Naive thymus-derived CD4-positive, alpha-beta T cell (primary cell): ENCODE measurements at regions of chr12 and their contacts with region 1.

Region 1: GRCh38 chr12:120012067-120012621 is 23.1 kb downstream of the BICDL1 start:
- DNase-seq: peak in 8 of 9 donors; percentile 31 to 98 (median 74)
- ATAC-seq: peak; percentile 78
- H3K4me3 ChIP-seq: peak overlapping the region; percentile 33
- H3K4me3 Mint-ChIP-seq: peak overlapping the region; percentile 8 to 86 (median 74)
- H3K27ac ChIP-seq: peak overlapping the region; percentile 93
- H3K27ac Mint-ChIP-seq: peak overlapping the region; percentile 93 to 100 (median 96)
- H3K4me1 ChIP-seq: peaks cover 73 to 79% of the 10 kb centered on the region in 2 donors
- H3K4me1 Mint-ChIP-seq: peaks cover 41 to 94% (median 82%) of the 10 kb centered on the region in 7 donors
- H3K27me3 ChIP-seq: no peaks in the 10 kb centered on the region
- H3K27me3 Mint-ChIP-seq: no peaks in the 10 kb centered on the region

Region 2: DNA sequence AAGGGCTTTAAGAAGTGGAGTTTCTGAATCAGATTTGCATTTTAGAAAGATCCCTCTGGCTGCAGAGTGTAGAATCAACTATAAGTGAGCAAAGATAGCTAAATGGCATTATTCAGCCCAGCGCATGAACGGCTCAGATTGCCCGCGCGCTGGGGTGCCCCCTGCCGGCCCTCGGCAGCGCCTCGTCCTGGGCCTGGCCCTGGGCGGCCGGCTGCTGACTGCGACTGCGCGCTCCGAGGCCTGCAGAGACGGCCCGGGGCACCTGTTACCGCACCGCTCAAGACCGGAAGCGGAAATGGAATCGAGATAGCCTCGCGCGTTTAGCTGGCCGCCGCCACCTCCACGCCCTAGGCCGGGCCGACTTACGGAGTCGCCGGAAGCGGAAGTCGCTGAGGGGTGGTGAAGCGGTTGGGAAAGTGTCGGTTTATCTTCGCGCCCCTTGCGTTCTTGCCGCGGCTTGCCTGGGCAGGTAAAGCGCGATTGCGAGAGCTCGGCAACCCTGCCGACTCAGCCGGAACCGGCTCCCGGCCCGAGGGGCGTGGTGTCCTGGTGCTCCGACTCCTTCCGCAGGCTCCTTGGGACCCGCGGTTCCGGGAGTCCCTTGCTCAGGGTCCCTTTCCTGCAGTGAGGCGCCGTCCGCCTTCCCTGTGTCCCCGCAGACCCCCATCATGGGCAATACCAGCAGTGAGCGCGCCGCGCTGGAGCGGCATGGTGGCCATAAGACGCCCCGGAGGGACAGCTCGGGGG is 344.4 kb before region 1 on chr12 and contains the start of gene PRKAB1:
- CTCF ChIA-PET with region 1: no interaction called
- POLR2A ChIA-PET with region 1: no interaction called
- intact Hi-C with region 1: loop called in 1 of 2 experiments (anchors 5 kb)
- DNase-seq: peak; percentile 91 to 96 (median 93)
- ATAC-seq: peak; percentile 96
- H3K4me3 ChIP-seq: peak within 1 kb of the TSS; percentile 81
- H3K4me3 Mint-ChIP-seq: peak within 1 kb of the TSS; percentile 85 to 98 (median 88)
- H3K27ac ChIP-seq: peak within 1 kb of the TSS; percentile 76
- H3K27ac Mint-ChIP-seq: peak within 1 kb of the TSS; percentile 77 to 96 (median 92)
- H3K4me1 ChIP-seq: peaks cover 20 to 30% of the 10 kb centered on the region in 2 donors
- H3K4me1 Mint-ChIP-seq: peaks cover 27 to 63% (median 55%) of the 10 kb centered on the region in 7 donors
- H3K27me3 ChIP-seq: no peaks in the 10 kb centered on the region
- H3K27me3 Mint-ChIP-seq: no peaks in the 10 kb centered on the region
- total RNA-seq, gene PRKAB1: 23.5 to 48.7 (median 43.3) TPM

Region 3: GRCh38 chr12:119938049-119938667 is 74.0 kb before region 1 on chr12:
- CTCF ChIA-PET with region 1: no interaction called
- POLR2A ChIA-PET with region 1: no interaction called
- intact Hi-C with region 1: loop called in 1 of 2 experiments (anchors 2 kb)
- DNase-seq: peak; percentile 28 to 67 (median 51)
- ATAC-seq: peak; percentile 89
- H3K4me3 ChIP-seq: no peak overlapping the region
- H3K4me3 Mint-ChIP-seq: no peak overlapping the region
- H3K27ac ChIP-seq: no peak overlapping the region
- H3K27ac Mint-ChIP-seq: no peak overlapping the region
- H3K4me1 ChIP-seq: no peaks in the 10 kb centered on the region
- H3K4me1 Mint-ChIP-seq: no peaks in the 10 kb centered on the region
- H3K27me3 ChIP-seq: no peaks in the 10 kb centered on the region
- H3K27me3 Mint-ChIP-seq: peaks cover 0 to 7% (median 0%) of the 10 kb centered on the region in 5 donors

Region 4: DNA sequence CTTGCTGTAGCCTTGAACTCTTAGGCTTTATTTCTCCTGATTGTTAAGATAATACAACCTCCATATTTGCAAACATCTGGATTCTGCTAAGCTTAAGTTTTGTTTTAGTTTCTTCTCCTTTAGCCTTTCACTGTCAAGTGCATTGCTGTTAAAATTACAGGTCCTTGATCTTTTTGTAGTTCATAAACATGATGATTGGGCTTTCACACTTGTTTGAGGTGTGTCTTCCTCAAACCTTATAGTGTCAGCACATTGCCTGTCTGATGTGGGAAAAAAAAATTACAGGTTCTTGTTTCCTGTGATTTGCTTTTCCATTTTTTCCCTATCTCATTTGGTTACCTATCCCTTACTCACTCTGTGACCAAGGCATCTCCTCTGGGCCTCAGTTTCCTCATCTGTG is 36.1 kb after region 1 on chr12:
- CTCF ChIA-PET with region 1: interaction called, 3 read pairs
- POLR2A ChIA-PET with region 1: interaction called, 10 read pairs
- intact Hi-C with region 1: no loop called
- DNase-seq: peak in 4 of 9 donors; percentile 14 to 31 (median 20)
- ATAC-seq: peak; percentile 74
- H3K4me3 ChIP-seq: no peak overlapping the region
- H3K4me3 Mint-ChIP-seq: peak overlapping the region in 6 of 10 donors; percentile 12 to 59 (median 38)
- H3K27ac ChIP-seq: no peak overlapping the region
- H3K27ac Mint-ChIP-seq: peak overlapping the region; percentile 62 to 90 (median 87)
- H3K4me1 ChIP-seq: peaks cover 10 to 19% of the 10 kb centered on the region in 2 donors
- H3K4me1 Mint-ChIP-seq: peaks cover 9 to 52% (median 38%) of the 10 kb centered on the region in 7 donors
- H3K27me3 ChIP-seq: no peaks in the 10 kb centered on the region
- H3K27me3 Mint-ChIP-seq: no peaks in the 10 kb centered on the region

Region 5: DNA sequence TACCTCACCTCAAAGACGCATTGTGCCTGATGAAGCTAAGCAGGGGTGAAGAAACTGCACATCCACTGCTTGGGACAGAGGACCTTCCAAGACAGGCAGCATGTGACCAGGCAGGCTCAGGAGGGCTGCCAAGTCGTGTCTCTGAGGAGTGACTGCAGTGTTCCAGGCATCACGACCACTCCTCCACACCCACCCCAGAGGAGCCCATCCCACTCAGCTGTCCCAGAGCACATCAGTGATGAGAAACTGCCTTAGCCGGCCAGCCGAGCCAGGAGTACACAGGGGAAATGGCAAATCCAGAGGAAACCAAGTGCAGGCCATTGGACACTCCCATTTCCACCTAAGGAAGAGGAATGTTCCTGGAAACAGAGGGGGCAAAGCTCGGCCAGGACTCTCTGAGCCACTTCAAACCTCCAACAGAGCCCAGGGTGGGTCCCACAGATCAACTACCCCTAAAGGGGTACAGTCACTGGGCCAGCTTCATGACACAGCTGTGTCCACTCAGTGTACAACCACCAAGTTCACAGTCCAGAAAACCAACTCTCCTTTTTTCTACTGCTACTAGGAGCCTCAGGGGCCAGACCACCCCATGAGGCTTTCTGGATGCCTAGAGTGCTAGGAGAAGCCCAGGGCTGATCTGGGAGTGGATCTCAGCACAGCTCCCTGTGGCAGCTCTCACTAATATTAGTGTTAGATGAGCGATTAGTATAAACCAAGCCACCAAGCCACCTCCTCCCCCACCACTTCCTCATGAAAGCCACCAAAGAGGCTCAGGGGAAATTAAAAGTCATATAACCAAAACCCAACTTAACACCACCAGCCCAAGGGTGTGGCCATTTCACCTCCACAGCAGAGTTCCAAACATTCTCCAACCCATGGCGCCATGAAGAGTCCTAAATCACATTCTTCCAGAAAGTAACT is 238.0 kb after region 1 on chr12:
- CTCF ChIA-PET with region 1: no interaction called
- POLR2A ChIA-PET with region 1: no interaction called
- intact Hi-C with region 1: loop called in 1 of 2 experiments (anchors 1 kb)
- DNase-seq: peak in 1 of 9 donors; percentile 37
- ATAC-seq: no peak
- H3K4me3 ChIP-seq: peak overlapping the region; percentile 46
- H3K4me3 Mint-ChIP-seq: peak overlapping the region; percentile 74 to 86 (median 84)
- H3K27ac ChIP-seq: peak overlapping the region; percentile 55
- H3K27ac Mint-ChIP-seq: peak overlapping the region; percentile 88 to 99 (median 96)
- H3K4me1 ChIP-seq: peaks cover 71 to 82% of the 10 kb centered on the region in 2 donors
- H3K4me1 Mint-ChIP-seq: peaks cover 68 to 92% (median 81%) of the 10 kb centered on the region in 7 donors
- H3K27me3 ChIP-seq: no peaks in the 10 kb centered on the region
- H3K27me3 Mint-ChIP-seq: no peaks in the 10 kb centered on the region